MCF 10A (cell line): ENCODE measurements at regions of chr14 and their contacts with region 1.

Region 1: GRCh38 chr14:59707778-59708561 is 131.4 kb upstream of the CCDC175 start:
- DNase-seq: peak; percentile 61
- H3K4me3 Mint-ChIP-seq: peak overlapping the region; percentile 2
- H3K27ac Mint-ChIP-seq: peak overlapping the region; percentile 95
- H3K4me1 Mint-ChIP-seq: peaks cover 37% of the 10 kb centered on the region
- H3K27me3 Mint-ChIP-seq: no peaks in the 10 kb centered on the region
- CTCF ChIP-seq: peak; percentile 22

Region 2: DNA sequence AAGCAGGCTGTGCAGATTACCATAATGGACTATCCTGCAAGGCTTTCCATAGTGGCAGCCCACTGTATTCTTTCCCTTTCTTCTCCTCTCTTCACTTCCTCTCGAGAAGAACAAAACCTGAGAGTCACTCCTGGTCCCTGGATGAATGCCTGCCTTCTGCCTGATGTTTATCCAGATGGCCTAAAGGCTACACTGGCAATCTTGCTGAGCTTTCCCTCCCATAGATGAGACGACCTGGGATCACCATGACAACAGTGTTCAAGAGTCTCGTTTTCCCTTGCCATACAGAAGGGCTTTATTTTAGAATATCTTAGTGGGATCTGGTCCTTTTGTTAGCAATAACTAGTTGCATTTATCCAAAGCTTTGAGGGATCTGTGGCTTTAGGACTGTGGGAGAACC is 20.4 kb after region 1 on chr14:
- CTCF ChIA-PET with region 1: interaction called, 10 read pairs
- POLR2A ChIA-PET with region 1: interaction called, 9 read pairs
- intact Hi-C with region 1: no loop called
- DNase-seq: no peak
- H3K4me3 Mint-ChIP-seq: no peak overlapping the region
- H3K27ac Mint-ChIP-seq: no peak overlapping the region
- H3K4me1 Mint-ChIP-seq: peaks cover 41% of the 10 kb centered on the region
- H3K27me3 Mint-ChIP-seq: no peaks in the 10 kb centered on the region
- CTCF ChIP-seq: no peak

Region 3: GRCh38 chr14:59918824-59919569 is 211.0 kb after region 1 on chr14:
- CTCF ChIA-PET with region 1: interaction called, 5 read pairs
- POLR2A ChIA-PET with region 1: no interaction called
- intact Hi-C with region 1: loop called (anchors 5 kb)
- DNase-seq: peak; percentile 34
- H3K4me3 Mint-ChIP-seq: no peak overlapping the region
- H3K27ac Mint-ChIP-seq: no peak overlapping the region
- H3K4me1 Mint-ChIP-seq: no peaks in the 10 kb centered on the region
- H3K27me3 Mint-ChIP-seq: no peaks in the 10 kb centered on the region
- CTCF ChIP-seq: peak; percentile 34